Prostate gland (tissue), 2 donors: ENCODE measurements at regions of chr17 and their contacts with region 1.

Region 1: GRCh38 chr17:20992987-20993862 is 49.6 kb downstream of the USP22 start:
- DNase-seq: peak; percentile 61
- H3K4me3 ChIP-seq: no peak overlapping the region
- H3K27ac ChIP-seq: no peak overlapping the region
- H3K4me1 ChIP-seq: peaks cover under 1% of the 10 kb centered on the region
- H3K27me3 ChIP-seq: no peaks in the 10 kb centered on the region
- CTCF ChIP-seq: peak; percentile 78 to 94 (median 89)
- POLR2A ChIP-seq: no peak

Region 2: DNA sequence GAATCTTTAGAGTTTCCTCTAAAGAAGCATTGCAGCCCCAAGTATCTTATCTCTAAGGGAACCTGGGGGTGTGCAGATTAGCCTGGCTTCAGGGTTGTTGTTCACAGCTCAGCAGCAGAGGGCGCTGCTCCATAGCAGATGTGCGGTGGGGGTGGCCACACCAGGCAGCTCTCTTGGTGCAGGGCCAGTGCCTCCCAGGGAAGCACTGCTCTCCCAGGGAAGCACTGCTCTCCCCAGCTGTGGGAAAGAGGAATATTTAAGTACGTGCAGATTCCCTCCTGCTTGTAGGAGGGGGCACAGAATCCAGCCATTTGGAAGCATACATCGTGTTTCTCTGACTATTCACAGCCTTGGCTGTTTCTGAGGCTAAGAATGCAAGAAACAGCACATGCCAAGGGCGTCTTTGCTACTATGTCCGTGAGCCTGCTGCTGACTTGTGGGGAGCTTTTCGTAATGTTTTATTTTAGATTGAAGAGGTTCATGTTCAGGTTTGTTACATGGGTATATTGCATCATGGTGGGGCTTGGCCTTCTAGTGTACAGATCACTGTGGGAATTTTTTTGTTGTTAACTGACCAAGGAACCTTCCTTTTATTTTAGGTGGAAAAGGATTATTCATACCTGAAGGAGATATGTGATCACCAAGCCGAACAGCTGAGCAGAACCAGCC is 766.3 kb before region 1 on chr17:
- intact Hi-C with region 1: loop called (anchors 5 kb)
- DNase-seq: peak; percentile 74
- H3K4me3 ChIP-seq: no peak overlapping the region
- H3K27ac ChIP-seq: no peak overlapping the region
- H3K4me1 ChIP-seq: no peaks in the 10 kb centered on the region
- H3K27me3 ChIP-seq: no peaks in the 10 kb centered on the region
- CTCF ChIP-seq: peak; percentile 41 to 88 (median 78)
- POLR2A ChIP-seq: no peak

Region 3: GRCh38 chr17:20908373-20909273 is 84.6 kb before region 1 on chr17:
- intact Hi-C with region 1: loop called (anchors 5 kb)
- DNase-seq: peak; percentile 83
- H3K4me3 ChIP-seq: peak overlapping the region; percentile 37
- H3K27ac ChIP-seq: peak overlapping the region; percentile 84 to 90
- H3K4me1 ChIP-seq: no peaks in the 10 kb centered on the region
- H3K27me3 ChIP-seq: no peaks in the 10 kb centered on the region
- CTCF ChIP-seq: peak; percentile 17 to 74 (median 68)
- POLR2A ChIP-seq: peak; percentile 76

Region 4: GRCh38 chr17:21814776-21815175 is 821.6 kb after region 1 on chr17:
- intact Hi-C with region 1: no loop called
- DNase-seq: no peak
- H3K4me3 ChIP-seq: no peak overlapping the region
- H3K27ac ChIP-seq: no peak overlapping the region
- H3K4me1 ChIP-seq: no peaks in the 10 kb centered on the region
- H3K27me3 ChIP-seq: no peaks in the 10 kb centered on the region
- CTCF ChIP-seq: no peak
- POLR2A ChIP-seq: no peak